CD8-positive, alpha-beta memory T cell (primary cell): ENCODE measurements at regions of chr1 and their contacts with region 1.

Region 1: DNA sequence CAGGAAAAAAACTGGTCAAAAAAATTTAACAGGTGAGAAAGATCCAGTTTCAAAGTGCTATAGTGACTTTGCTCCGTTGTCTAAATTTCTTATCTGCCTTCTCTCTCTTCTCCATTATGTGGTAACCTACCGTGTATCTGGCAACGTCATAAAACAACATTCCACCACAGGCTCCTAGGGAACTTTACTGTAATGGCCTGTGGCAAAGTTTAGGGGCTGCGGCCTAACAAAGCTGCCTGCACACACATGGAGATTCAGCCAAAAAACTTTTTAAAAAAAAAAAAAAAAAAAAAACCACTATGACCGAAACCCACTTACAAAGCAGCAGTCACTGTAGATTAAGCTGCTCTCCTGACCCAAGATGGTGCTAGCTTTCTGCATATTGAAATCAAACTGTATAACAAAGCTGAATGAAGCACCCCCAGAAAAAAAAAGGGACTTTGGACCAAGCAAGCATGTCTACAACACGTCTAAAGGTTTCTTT is 202.6 kb downstream of the SLC45A1 start:
- DNase-seq: peak in 1 of 5 donors; percentile 23
- H3K4me3 ChIP-seq: no peak overlapping the region
- H3K4me3 Mint-ChIP-seq: peak overlapping the region in 6 of 7 donors; percentile 35 to 76 (median 45)
- H3K27ac ChIP-seq: peak overlapping the region; percentile 27
- H3K27ac Mint-ChIP-seq: peak overlapping the region in 7 of 8 donors; percentile 43 to 77 (median 76)
- H3K4me1 ChIP-seq: peaks cover 59% of the 10 kb centered on the region
- H3K4me1 Mint-ChIP-seq: peaks cover 52 to 62% (median 53%) of the 10 kb centered on the region in 3 donors
- H3K27me3 ChIP-seq: no peaks in the 10 kb centered on the region
- H3K27me3 Mint-ChIP-seq: no peaks in the 10 kb centered on the region

Region 2: DNA sequence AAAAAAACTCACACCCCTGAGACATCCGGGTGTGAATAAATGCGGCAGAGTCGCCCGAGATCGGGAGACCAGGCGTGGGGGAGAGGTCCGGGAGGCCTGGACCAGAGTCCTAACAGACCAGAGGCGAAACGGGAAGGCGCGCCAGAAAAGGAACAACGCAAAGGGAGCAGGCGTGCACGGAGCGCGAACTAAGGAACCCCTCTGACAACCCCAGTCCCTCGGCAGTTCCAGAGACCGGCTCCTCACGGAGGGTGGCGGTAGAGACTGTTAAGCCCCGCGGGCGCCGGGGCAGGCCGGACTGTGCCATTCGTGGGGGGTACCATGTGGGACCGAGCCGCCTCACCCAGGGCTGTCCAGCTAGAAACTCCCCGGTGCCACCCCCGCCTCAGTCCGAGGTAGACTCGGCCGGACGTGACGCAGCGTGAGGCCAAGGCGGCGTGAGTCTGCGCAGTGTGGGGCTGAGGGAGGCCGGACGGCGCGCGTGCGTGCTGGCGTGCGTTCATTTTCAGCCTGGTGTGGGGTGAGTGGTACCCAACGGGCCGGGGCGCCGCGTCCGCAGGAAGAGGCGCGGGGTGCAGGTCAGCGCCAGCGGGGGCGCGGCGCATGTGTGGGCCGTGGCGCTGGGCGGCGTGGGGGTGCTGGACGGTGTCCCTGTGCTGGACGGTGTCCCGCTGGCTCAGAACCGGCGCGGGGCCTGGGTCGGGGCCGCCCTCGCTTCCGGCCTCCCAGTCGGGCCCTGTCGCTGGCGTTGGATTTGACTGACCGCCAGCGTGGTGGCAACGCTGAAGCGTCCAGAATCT is 559.1 kb before region 1 on chr1 and contains the start of gene PARK7:
- CTCF ChIA-PET with region 1: no interaction called
- POLR2A ChIA-PET with region 1: interaction called, 15 read pairs
- DNase-seq: peak; percentile 100
- H3K4me3 ChIP-seq: peak within 1 kb of the TSS; percentile 80
- H3K4me3 Mint-ChIP-seq: peak within 1 kb of the TSS; percentile 90 to 99 (median 97)
- H3K27ac ChIP-seq: peak within 1 kb of the TSS; percentile 88
- H3K27ac Mint-ChIP-seq: peak within 1 kb of the TSS; percentile 90 to 100 (median 98)
- H3K4me1 ChIP-seq: peaks cover 50% of the 10 kb centered on the region
- H3K4me1 Mint-ChIP-seq: peaks cover 59 to 79% (median 72%) of the 10 kb centered on the region in 3 donors
- H3K27me3 ChIP-seq: no peaks in the 10 kb centered on the region
- H3K27me3 Mint-ChIP-seq: peaks cover 0 to 1% of the 10 kb centered on the region in 2 donors
- total RNA-seq, gene PARK7: 583 to 628 TPM